WTC11 (cell line): ENCODE measurements at regions of chr3 and their contacts with region 1.

Region 1: DNA sequence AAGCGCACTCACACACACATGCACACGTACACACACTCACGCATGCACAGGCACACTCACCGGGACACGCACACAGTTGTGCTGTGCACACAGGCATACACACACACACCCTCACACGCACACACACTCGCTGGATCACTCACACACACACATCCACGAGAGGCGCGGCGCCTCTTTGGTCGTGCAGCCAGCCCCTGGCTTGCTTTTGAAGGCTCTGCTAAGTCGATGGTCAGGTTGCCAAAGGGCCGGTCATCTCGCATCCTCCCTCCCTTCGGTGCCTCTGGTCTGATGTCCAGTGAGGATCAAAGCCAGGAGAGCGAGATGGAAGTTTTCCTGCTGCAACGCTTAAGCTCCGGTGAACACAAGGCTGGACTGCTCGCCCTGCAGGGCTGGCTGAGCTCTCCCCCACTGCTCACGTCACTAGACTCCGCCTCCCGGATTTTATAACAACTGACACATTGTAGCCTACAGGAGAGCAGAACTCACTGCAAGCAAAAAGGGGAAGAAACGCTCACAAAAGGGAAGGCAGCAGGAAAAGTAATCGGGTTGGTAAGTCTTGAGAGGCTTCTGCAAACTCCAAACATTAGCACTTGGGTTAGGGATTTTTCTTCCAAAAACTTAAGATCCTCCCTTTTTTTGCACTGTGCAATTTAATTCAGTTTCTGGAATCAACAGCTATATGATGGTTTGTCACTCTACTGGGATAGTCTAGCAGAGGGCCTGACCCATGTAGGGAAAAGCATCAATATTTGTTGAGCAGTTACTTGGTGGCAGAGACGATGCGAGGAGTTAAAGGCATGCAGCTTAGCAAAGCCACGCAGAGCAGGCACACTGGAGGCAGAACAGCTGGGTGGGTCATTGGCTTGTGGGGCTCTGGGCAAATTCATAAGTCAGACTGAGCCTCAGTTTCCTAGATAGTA is at the start of gene SRGAP3:
- DNase-seq: peak; percentile 85
- ATAC-seq: peak; percentile 97
- H3K4me3 Mint-ChIP-seq: peak within 1 kb of the TSS; percentile 81
- H3K27ac Mint-ChIP-seq: peak within 1 kb of the TSS; percentile 35
- H3K4me1 Mint-ChIP-seq: peaks cover 56% of the 10 kb centered on the region
- H3K27me3 Mint-ChIP-seq: no peaks in the 10 kb centered on the region
- CTCF ChIP-seq: no peak
- total RNA-seq, gene SRGAP3: 11.8 to 17.9 TPM (median 12.1 TPM) in 3 replicates

Region 2: GRCh38 chr3:9111866-9112265 is 137.7 kb before region 1 on chr3:
- CTCF ChIA-PET with region 1: interaction called, 11 read pairs
- POLR2A ChIA-PET with region 1: no interaction called
- DNase-seq: no peak
- ATAC-seq: peak; percentile 23
- H3K4me3 Mint-ChIP-seq: no peak overlapping the region
- H3K27ac Mint-ChIP-seq: no peak overlapping the region
- H3K4me1 Mint-ChIP-seq: peaks cover 7% of the 10 kb centered on the region
- H3K27me3 Mint-ChIP-seq: no peaks in the 10 kb centered on the region
- CTCF ChIP-seq: no peak

Region 3: GRCh38 chr3:9224490-9224889 is 25.0 kb before region 1 on chr3:
- CTCF ChIA-PET with region 1: interaction called, 13 read pairs
- POLR2A ChIA-PET with region 1: no interaction called
- DNase-seq: no peak
- ATAC-seq: no peak
- H3K4me3 Mint-ChIP-seq: no peak overlapping the region
- H3K27ac Mint-ChIP-seq: no peak overlapping the region
- H3K4me1 Mint-ChIP-seq: peaks cover 51% of the 10 kb centered on the region
- H3K27me3 Mint-ChIP-seq: no peaks in the 10 kb centered on the region; the same call in 1 of the 2 replicates
- CTCF ChIP-seq: no peak

Region 4: GRCh38 chr3:9260305-9260704 is 10.8 kb after region 1 on chr3:
- CTCF ChIA-PET with region 1: interaction called, 12 read pairs
- POLR2A ChIA-PET with region 1: no interaction called
- DNase-seq: no peak
- ATAC-seq: peak; percentile 76
- H3K4me3 Mint-ChIP-seq: no peak overlapping the region
- H3K27ac Mint-ChIP-seq: no peak overlapping the region
- H3K4me1 Mint-ChIP-seq: peaks cover 3% of the 10 kb centered on the region
- H3K27me3 Mint-ChIP-seq: peaks cover 9% of the 10 kb centered on the region
- CTCF ChIP-seq: no peak

Region 5: GRCh38 chr3:9525078-9525477 is 275.5 kb after region 1 on chr3:
- CTCF ChIA-PET with region 1: no interaction called
- POLR2A ChIA-PET with region 1: no interaction called
- DNase-seq: no peak
- ATAC-seq: no peak
- H3K4me3 Mint-ChIP-seq: no peak overlapping the region
- H3K27ac Mint-ChIP-seq: no peak overlapping the region
- H3K4me1 Mint-ChIP-seq: no peaks in the 10 kb centered on the region
- H3K27me3 Mint-ChIP-seq: peaks cover 22% of the 10 kb centered on the region
- CTCF ChIP-seq: no peak